Activated B cell treated with CpG ODN at 0.5 μM for 24 hours (primary cell): ENCODE measurements at regions of chr19 and their contacts with region 1.

Region 1: GRCh38 chr19:32674959-32675719 is at the start of gene ANKRD27:
- DNase-seq: peak; percentile 99
- ATAC-seq: peak; percentile 96
- H3K4me3 Mint-ChIP-seq: peak within 1 kb of the TSS; percentile 91
- H3K27ac Mint-ChIP-seq: peak within 1 kb of the TSS; percentile 84
- H3K4me1 Mint-ChIP-seq: peaks cover 27% of the 10 kb centered on the region
- H3K27me3 Mint-ChIP-seq: peaks cover 10% of the 10 kb centered on the region
- CTCF ChIP-seq: no peak
- total RNA-seq, gene ANKRD27: 33.1 and 44.7 TPM in 2 replicates

Region 2: GRCh38 chr19:32405431-32406161 is 269.5 kb before region 1 on chr19 and contains the start of gene DPY19L3:
- CTCF ChIA-PET with region 1: no interaction called
- POLR2A ChIA-PET with region 1: no interaction called
- intact Hi-C with region 1: loop called (anchors 5 kb)
- DNase-seq: peak; percentile 93
- ATAC-seq: peak; percentile 91
- H3K4me3 Mint-ChIP-seq: peak within 1 kb of the TSS; percentile 91
- H3K27ac Mint-ChIP-seq: peak within 1 kb of the TSS; percentile 93
- H3K4me1 Mint-ChIP-seq: peaks cover 16% of the 10 kb centered on the region
- H3K27me3 Mint-ChIP-seq: no peaks in the 10 kb centered on the region
- CTCF ChIP-seq: no peak
- total RNA-seq, gene DPY19L3: 22.1 and 29.8 TPM in 2 replicates

Region 3: GRCh38 chr19:32421589-32422361 is 253.4 kb before region 1 on chr19:
- CTCF ChIA-PET with region 1: no interaction called
- POLR2A ChIA-PET with region 1: no interaction called
- intact Hi-C with region 1: no loop called
- DNase-seq: no peak
- ATAC-seq: no peak
- H3K4me3 Mint-ChIP-seq: peak overlapping the region; percentile 12
- H3K27ac Mint-ChIP-seq: peak overlapping the region; percentile 79
- H3K4me1 Mint-ChIP-seq: peaks cover 16% of the 10 kb centered on the region
- H3K27me3 Mint-ChIP-seq: no peaks in the 10 kb centered on the region
- CTCF ChIP-seq: no peak

Region 4: GRCh38 chr19:32691291-32691951 is 16.3 kb after region 1 on chr19 and contains the start of gene NUDT19:
- CTCF ChIA-PET with region 1: no interaction called
- POLR2A ChIA-PET with region 1: interaction called, 28 read pairs
- intact Hi-C with region 1: loop called (anchors 1 kb)
- DNase-seq: peak; percentile 74
- ATAC-seq: peak; percentile 94
- H3K4me3 Mint-ChIP-seq: peak within 1 kb of the TSS; percentile 85
- H3K27ac Mint-ChIP-seq: peak within 1 kb of the TSS; percentile 70
- H3K4me1 Mint-ChIP-seq: peaks cover 41% of the 10 kb centered on the region
- H3K27me3 Mint-ChIP-seq: no peaks in the 10 kb centered on the region
- CTCF ChIP-seq: no peak
- total RNA-seq, gene NUDT19: 8.5 and 9.0 TPM in 2 replicates

Region 5: DNA sequence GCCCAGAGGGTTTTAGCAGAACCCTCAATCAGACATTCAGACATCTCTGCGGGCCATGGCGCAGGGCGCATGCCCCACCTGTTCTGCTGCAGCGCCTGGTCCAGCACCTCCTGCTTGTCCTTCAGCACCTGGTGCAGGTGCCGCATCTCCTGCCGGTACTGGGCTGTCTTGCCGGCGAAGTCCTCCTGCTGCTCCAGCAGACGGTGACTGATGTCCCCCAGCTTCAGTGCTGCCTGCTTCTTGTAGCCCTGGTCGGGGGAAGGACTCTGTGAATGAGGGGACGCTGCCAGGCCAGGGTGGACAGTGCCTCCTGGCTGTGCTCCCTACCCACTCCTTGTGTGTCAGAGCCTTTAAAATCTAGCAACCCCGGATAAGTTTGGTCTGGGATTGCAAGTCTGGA is 206.6 kb after region 1 on chr19:
- CTCF ChIA-PET with region 1: no interaction called
- POLR2A ChIA-PET with region 1: no interaction called
- intact Hi-C with region 1: no loop called
- DNase-seq: no peak
- ATAC-seq: no peak
- H3K4me3 Mint-ChIP-seq: no peak overlapping the region
- H3K27ac Mint-ChIP-seq: no peak overlapping the region
- H3K4me1 Mint-ChIP-seq: no peaks in the 10 kb centered on the region
- H3K27me3 Mint-ChIP-seq: no peaks in the 10 kb centered on the region
- CTCF ChIP-seq: no peak

Region 6: GRCh38 chr19:33064792-33065550 is 389.8 kb after region 1 on chr19 and contains the start of gene RHPN2:
- CTCF ChIA-PET with region 1: no interaction called
- POLR2A ChIA-PET with region 1: no interaction called
- intact Hi-C with region 1: loop called (anchors 10 kb)
- DNase-seq: peak; percentile 53
- ATAC-seq: peak; percentile 89
- H3K4me3 Mint-ChIP-seq: peak within 1 kb of the TSS; percentile 76
- H3K27ac Mint-ChIP-seq: no peak within 1 kb of the TSS
- H3K4me1 Mint-ChIP-seq: peaks cover 9% of the 10 kb centered on the region
- H3K27me3 Mint-ChIP-seq: peaks cover 5% of the 10 kb centered on the region
- CTCF ChIP-seq: no peak
- total RNA-seq, gene RHPN2: 1.0 and 1.7 TPM in 2 replicates

Region 7: DNA sequence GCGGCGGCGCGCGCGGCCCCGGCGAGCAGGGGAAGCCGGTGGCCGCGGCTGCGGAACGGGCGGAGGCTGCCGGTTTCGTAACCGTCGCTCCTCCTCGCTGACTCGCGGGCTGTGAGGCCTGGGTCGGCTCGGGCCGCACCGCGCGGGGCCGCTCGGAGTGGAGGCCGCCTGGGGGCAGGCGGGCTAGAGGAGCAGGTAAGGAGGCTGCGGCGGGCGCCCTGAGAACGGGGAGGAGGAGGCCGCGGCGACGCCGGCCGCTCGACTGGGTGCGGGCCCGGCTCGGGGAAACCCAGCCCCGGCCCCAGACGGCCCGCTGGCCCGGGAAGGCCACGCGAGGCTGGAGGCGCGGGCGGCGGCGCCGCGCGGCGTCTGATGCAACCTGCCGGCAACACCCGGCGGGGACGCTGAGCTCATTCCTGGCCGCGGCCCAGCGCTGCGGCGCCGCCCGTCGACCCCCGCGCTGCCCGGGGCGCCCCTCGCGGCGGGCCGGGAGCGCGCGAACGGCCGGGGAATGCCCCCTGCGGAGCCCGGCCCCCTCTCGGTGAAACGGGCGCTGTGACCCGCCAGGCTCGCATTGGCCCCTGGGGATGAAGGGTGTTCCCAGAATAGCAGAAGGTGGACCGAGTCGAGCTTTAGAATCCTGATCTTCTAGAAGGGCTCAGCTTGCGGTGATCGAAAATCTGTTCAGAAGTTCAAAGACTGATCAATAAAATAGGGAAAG is 698.7 kb after region 1 on chr19 and contains the start of gene CEBPG:
- CTCF ChIA-PET with region 1: no interaction called
- POLR2A ChIA-PET with region 1: no interaction called
- intact Hi-C with region 1: loop called (anchors 10 kb)
- DNase-seq: no peak
- ATAC-seq: peak; percentile 34
- H3K4me3 Mint-ChIP-seq: peak within 1 kb of the TSS; percentile 86
- H3K27ac Mint-ChIP-seq: peak within 1 kb of the TSS; percentile 93
- H3K4me1 Mint-ChIP-seq: peaks cover 52% of the 10 kb centered on the region
- H3K27me3 Mint-ChIP-seq: no peaks in the 10 kb centered on the region
- CTCF ChIP-seq: no peak
- total RNA-seq, gene CEBPG: 30.6 and 32.0 TPM in 2 replicates